Aorta (tissue), 5 donors: ENCODE measurements at regions of chr4 and their contacts with region 1.

Region 1: DNA sequence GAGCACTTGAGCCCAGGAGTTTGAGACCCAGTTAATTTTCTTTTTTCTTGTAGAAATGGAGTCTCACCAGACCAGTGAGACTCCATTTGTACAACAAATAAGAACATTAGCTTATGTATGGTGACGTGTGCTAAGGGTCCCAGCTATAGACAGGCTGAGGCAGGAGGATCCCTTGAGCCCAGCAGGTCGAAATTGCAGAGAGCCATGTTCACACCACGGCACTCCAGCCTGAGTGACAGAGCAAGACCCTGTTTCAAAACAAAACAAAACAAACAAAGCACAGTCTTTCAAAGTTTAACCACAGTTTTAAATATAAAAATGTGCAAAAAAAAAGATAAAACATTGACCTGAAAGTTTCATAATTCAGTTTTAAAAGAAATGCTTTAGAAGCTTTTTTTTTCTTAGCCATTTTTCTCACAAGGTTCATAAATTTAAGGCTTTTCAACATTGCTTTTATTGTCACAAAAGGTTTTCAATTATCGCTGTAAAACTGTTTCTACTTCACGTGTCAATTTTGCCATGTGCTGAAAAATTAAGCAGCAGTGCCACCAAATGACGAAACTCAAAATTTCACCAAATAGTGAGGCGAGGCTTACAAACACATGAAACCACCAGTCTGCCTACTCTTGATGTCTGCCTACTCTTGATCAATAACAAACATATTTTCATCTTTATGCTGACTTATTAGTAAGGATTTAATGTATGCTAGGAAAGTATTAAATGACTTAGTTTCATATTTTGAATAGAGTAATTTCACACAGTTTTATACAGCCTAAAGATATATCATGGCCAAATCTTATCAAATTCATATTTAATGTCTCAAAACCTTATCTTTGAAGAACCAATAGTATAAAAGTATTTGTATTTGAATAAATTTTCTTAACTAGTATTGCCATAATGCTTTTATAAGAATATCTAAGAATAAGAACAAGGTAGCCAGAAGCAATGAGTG is 126.3 kb downstream of the NEK1 start:
- DNase-seq: no peak
- ATAC-seq: peak; percentile 74
- H3K4me3 ChIP-seq: no peak overlapping the region
- H3K27ac ChIP-seq: no peak overlapping the region
- H3K4me1 ChIP-seq: no peaks in the 10 kb centered on the region
- H3K27me3 ChIP-seq: no peaks in the 10 kb centered on the region

Region 2: DNA sequence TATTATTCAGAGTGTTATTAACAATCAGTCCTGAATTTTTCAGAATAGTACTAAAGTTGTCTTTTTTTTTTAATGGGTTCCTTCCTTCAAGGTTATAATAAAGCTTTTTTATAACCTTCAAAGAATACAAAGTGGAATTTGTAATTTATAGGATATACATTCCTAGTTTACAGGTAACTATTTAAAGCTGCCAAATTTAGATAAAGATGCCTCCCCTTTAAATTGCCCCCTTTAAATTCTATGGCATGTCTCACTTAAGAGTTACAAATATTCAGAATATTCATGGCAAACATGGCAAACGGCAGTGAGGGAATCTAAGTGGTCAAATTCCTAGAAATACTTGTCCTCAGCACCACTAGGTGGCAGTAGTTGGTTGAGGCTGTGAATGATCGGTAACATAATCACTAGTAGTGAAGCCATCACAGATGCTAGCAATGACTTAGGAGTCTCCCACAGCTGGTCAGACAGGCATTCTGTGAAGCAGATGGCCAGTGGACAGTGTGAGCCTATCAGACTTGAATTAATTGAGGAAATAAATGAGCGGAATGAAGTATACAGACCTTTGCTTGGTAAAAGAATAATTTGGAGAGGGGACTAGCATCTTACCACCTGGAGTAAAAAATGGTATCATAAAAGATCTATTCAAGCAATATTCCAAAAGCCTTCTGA is 562.4 kb before region 1 on chr4:
- intact Hi-C with region 1: loop called (anchors 10 kb)
- DNase-seq: peak in 1 of 2 donors; percentile 45
- ATAC-seq: peak; percentile 70
- H3K4me3 ChIP-seq: no peak overlapping the region
- H3K27ac ChIP-seq: no peak overlapping the region
- H3K4me1 ChIP-seq: no peaks in the 10 kb centered on the region
- H3K27me3 ChIP-seq: no peaks in the 10 kb centered on the region

Region 3: GRCh38 chr4:169024762-169025161 is 461.3 kb before region 1 on chr4:
- intact Hi-C with region 1: loop called (anchors 10 kb)
- DNase-seq: no peak
- ATAC-seq: no peak
- H3K4me3 ChIP-seq: no peak overlapping the region
- H3K27ac ChIP-seq: no peak overlapping the region
- H3K4me1 ChIP-seq: no peaks in the 10 kb centered on the region
- H3K27me3 ChIP-seq: no peaks in the 10 kb centered on the region

Region 4: DNA sequence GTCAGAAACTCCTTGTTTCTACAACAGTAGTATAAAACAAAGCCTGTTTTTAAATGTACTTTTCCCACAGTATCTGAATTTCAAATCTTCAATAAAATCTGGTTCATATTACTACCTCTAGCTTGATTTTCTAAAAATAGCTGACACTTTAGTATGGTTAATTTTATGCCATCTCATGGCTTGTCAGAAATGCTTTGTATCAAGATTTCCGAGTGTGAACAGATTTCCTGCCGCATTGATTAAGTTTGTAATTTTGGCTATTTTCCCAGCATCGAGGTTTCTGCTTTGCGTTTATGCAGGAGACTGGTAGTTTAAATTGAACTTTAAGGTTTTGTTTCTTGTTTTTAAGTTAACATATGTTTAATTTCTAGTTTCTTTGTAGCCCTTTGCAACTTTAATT is 178.5 kb after region 1 on chr4:
- intact Hi-C with region 1: no loop called
- DNase-seq: no peak
- ATAC-seq: no peak
- H3K4me3 ChIP-seq: no peak overlapping the region
- H3K27ac ChIP-seq: no peak overlapping the region
- H3K4me1 ChIP-seq: no peaks in the 10 kb centered on the region
- H3K27me3 ChIP-seq: no peaks in the 10 kb centered on the region